ENCODE measurements at regions of chr4 and their contacts with region 1.

Region 1: GRCh38 chr4:53702334-53703266 is 111.3 kb upstream of the LNX1 start:
- DNase-seq: peak; percentile 54
- ATAC-seq: peak; percentile 81
- H3K4me3 ChIP-seq: peak overlapping the region in 4 of 5 experiments; percentile 7 to 50 (median 41)
- H3K4me3 Mint-ChIP-seq: peak overlapping the region; percentile 71
- H3K27ac ChIP-seq: peak overlapping the region; percentile 42 to 58
- H3K27ac Mint-ChIP-seq: peak overlapping the region; percentile 93
- H3K4me1 ChIP-seq: peaks cover 43 to 48% of the 10 kb centered on the region in 2 donors
- H3K4me1 Mint-ChIP-seq: peaks cover 57% of the 10 kb centered on the region
- H3K27me3 ChIP-seq: no peaks in the 10 kb centered on the region
- H3K27me3 Mint-ChIP-seq: no peaks in the 10 kb centered on the region
- CTCF ChIP-seq: no peak

Region 2: DNA sequence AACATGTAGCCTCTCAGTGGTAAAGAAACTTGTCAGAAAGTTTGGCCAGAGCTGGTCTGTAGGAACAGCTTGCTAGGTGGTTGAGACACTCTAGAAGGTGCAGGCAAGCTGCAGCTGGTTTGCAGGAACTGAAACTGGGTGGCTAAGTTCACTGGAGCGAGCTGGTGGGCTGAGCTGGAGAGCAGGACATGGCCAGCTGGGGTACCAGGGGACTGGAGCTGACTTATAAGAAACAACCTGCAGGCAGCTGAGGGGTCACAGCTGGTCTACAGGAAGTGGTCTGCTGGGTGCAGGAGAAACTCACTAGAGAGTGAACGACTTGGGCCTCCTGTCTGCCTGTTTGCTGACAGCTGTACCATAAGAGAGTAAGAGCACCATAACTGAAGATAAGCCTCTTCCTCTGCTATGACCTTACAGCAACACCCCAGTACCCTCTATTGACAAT is 45.8 kb after region 1 on chr4:
- CTCF ChIA-PET with region 1: interaction called, 29 read pairs
- POLR2A ChIA-PET with region 1: interaction called, 8 read pairs
- intact Hi-C with region 1: loop called (anchors 1 kb)
- DNase-seq: peak; percentile 79
- ATAC-seq: peak; percentile 92
- H3K4me3 ChIP-seq: peak overlapping the region in 1 of 5 experiments; percentile 4
- H3K4me3 Mint-ChIP-seq: peak overlapping the region; percentile 44
- H3K27ac ChIP-seq: peak overlapping the region; percentile 51 to 78
- H3K27ac Mint-ChIP-seq: peak overlapping the region; percentile 90
- H3K4me1 ChIP-seq: peaks cover 41 to 50% of the 10 kb centered on the region in 2 donors
- H3K4me1 Mint-ChIP-seq: peaks cover 56% of the 10 kb centered on the region
- H3K27me3 ChIP-seq: no peaks in the 10 kb centered on the region
- H3K27me3 Mint-ChIP-seq: no peaks in the 10 kb centered on the region
- CTCF ChIP-seq: no peak

Region 3: GRCh38 chr4:53804719-53805118 is 102.1 kb after region 1 on chr4:
- CTCF ChIA-PET with region 1: interaction called, 33 read pairs
- POLR2A ChIA-PET with region 1: no interaction called
- intact Hi-C with region 1: loop called (anchors 1 kb)
- DNase-seq: peak; percentile 53
- ATAC-seq: no peak
- H3K4me3 ChIP-seq: no peak overlapping the region
- H3K4me3 Mint-ChIP-seq: no peak overlapping the region
- H3K27ac ChIP-seq: no peak overlapping the region
- H3K27ac Mint-ChIP-seq: no peak overlapping the region
- H3K4me1 ChIP-seq: no peaks in the 10 kb centered on the region
- H3K4me1 Mint-ChIP-seq: no peaks in the 10 kb centered on the region
- H3K27me3 ChIP-seq: no peaks in the 10 kb centered on the region
- H3K27me3 Mint-ChIP-seq: peaks cover 6% of the 10 kb centered on the region
- CTCF ChIP-seq: peak; percentile 46

Region 4: GRCh38 chr4:53908661-53909078 is 206.1 kb after region 1 on chr4:
- CTCF ChIA-PET with region 1: interaction called, 9 read pairs
- POLR2A ChIA-PET with region 1: no interaction called
- intact Hi-C with region 1: loop called (anchors 5 kb)
- DNase-seq: peak; percentile 53
- ATAC-seq: no peak
- H3K4me3 ChIP-seq: peak overlapping the region in 1 of 5 experiments; percentile 27
- H3K4me3 Mint-ChIP-seq: peak overlapping the region; percentile 10
- H3K27ac ChIP-seq: no peak overlapping the region
- H3K27ac Mint-ChIP-seq: no peak overlapping the region
- H3K4me1 ChIP-seq: peaks cover 9 to 13% of the 10 kb centered on the region in 2 donors
- H3K4me1 Mint-ChIP-seq: peaks cover 12% of the 10 kb centered on the region
- H3K27me3 ChIP-seq: peaks cover 0 to 24% (median 18%) of the 10 kb centered on the region in 4 experiments
- H3K27me3 Mint-ChIP-seq: peaks cover 56% of the 10 kb centered on the region
- CTCF ChIP-seq: peak; percentile 64

Region 5: DNA sequence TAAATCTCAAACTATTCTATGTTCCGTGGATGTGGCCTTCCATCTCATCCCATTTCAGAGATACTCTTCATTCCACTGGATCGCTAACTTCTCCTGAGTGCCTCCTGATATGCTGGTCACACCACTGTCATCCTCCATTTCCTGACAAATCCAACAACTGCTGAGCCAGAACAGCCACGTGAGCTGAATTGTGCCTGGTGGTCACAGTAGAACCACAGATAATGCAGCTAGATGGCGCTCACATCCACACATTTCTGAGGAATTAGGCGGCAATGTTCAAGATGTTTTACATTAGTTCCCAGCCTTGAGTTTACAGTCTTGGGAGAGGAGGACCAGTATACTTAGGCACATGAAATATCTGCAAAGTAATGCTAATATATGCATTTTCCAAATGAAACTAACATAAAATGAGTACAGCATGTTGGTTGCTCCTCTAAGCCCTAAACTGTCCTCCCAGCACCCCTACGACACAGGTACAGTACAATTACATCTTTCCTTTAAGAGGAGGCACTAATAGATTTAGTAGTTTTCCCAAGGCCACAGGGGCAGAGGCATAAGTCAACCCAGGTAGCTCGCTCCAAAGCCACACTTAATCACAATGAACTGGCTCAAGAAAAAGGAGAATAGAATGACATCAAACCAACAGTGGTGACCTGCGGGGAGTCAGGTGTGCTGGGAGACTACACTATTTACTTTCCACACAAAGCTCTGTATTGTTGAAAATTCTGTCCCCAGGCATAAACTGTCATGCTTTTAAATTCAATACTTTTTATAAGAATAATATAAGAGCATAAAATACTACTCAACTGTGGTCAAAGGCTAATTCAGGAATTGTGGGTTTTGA is 227.6 kb after region 1 on chr4:
- CTCF ChIA-PET with region 1: interaction called, 12 read pairs
- POLR2A ChIA-PET with region 1: no interaction called
- intact Hi-C with region 1: no loop called
- DNase-seq: peak; percentile 60
- ATAC-seq: no peak
- H3K4me3 ChIP-seq: no peak overlapping the region
- H3K4me3 Mint-ChIP-seq: no peak overlapping the region
- H3K27ac ChIP-seq: no peak overlapping the region
- H3K27ac Mint-ChIP-seq: no peak overlapping the region
- H3K4me1 ChIP-seq: no peaks in the 10 kb centered on the region
- H3K4me1 Mint-ChIP-seq: no peaks in the 10 kb centered on the region
- H3K27me3 ChIP-seq: peaks cover 0 to 9% (median 3%) of the 10 kb centered on the region in 4 experiments
- H3K27me3 Mint-ChIP-seq: peaks cover 22% of the 10 kb centered on the region
- CTCF ChIP-seq: peak; percentile 64

Measured in B cell (primary cell).